ENCODE measurements at regions of chr12 and their contacts with region 1.

Region 1: DNA sequence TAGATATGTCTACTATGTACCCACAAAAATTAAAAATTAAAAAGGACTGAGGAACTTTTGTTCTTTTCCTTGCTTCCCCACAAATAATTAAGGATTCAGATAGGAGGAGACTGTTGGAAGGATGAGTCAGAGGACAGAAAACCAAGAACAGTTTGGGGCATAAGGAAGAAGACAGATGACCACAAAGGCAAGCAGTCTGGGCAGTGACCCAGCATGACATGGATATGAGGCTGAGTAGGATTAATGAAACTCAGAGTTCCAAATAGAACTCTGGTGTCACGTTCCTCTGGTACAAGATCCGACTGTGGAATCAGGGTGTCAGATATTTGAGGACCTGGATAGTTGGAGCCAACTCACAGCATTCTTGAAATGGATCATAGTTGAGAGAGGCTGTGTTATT is 89.3 kb upstream of the SLC38A4 start:
- DNase-seq: peak in 2 of 5 donors; percentile 35 to 50
- ATAC-seq: peak in 3 of 4 donors; percentile 57 to 79 (median 71)
- H3K4me3 ChIP-seq: no peak overlapping the region
- H3K27ac ChIP-seq: no peak overlapping the region
- H3K4me1 ChIP-seq: peaks cover 0 to 4% (median 0%) of the 10 kb centered on the region in 12 donors
- H3K27me3 ChIP-seq: no peaks in the 10 kb centered on the region
- CTCF ChIP-seq: no peak
- POLR2A ChIP-seq: no peak

Region 2: DNA sequence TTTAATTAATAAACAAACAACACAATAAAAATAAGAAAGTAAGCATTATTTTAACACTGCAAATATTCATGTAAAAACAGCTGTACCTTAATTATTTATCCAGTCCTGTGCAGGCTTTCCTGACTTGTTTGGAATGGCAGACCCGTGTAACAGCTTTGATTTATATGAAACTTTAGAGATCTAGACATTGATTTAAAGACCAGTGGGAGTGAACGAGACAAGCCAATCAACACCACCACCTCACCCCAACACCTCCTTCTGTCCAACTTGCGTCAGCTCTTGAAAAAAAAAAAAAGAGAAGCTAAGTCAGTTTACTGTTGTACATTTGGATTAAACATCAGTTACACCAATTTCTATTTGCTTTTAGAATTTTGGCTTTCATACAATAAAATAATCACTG is 111.6 kb before region 1 on chr12:
- intact Hi-C with region 1: no loop called
- DNase-seq: no peak
- ATAC-seq: no peak
- H3K4me3 ChIP-seq: no peak overlapping the region
- H3K27ac ChIP-seq: no peak overlapping the region
- H3K4me1 ChIP-seq: no peaks in the 10 kb centered on the region
- H3K27me3 ChIP-seq: no peaks in the 10 kb centered on the region
- CTCF ChIP-seq: no peak
- POLR2A ChIP-seq: no peak

Region 3: DNA sequence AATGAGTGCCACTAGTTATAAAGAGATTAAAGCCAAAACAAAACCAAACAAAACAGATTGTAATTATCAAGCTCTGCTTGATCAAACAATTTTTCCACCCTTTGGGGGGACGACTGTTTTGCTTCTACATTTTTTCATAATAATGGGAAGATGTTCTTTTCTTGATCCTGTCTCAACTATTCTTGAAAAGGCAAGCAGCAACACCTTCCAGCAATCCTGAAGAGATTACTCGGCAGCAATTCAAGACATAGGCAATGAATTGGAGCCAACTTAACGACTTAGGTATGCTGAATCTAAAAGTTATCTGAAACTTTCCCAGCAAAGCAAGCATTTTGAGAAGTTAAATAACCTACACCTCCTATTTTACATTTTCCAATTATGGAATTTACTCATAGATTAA is 19.4 kb before region 1 on chr12:
- intact Hi-C with region 1: loop called in 2 of 10 experiments (anchors 1 kb)
- DNase-seq: no peak
- ATAC-seq: no peak
- H3K4me3 ChIP-seq: no peak overlapping the region
- H3K27ac ChIP-seq: no peak overlapping the region
- H3K4me1 ChIP-seq: peaks cover 0 to 4% (median 0%) of the 10 kb centered on the region in 12 donors
- H3K27me3 ChIP-seq: no peaks in the 10 kb centered on the region
- CTCF ChIP-seq: no peak
- POLR2A ChIP-seq: no peak

Region 4: GRCh38 chr12:47216150-47216677 is 301.1 kb after region 1 on chr12:
- intact Hi-C with region 1: no loop called
- DNase-seq: peak in 3 of 5 donors; percentile 35 to 52 (median 37)
- ATAC-seq: peak in 3 of 4 donors; percentile 55 to 74 (median 64)
- H3K4me3 ChIP-seq: peak overlapping the region in 5 of 12 donors; percentile 13 to 52 (median 26)
- H3K27ac ChIP-seq: peak overlapping the region in 2 of 12 donors; percentile 67 to 91
- H3K4me1 ChIP-seq: peaks cover 0 to 21% (median 0%) of the 10 kb centered on the region in 12 donors
- H3K27me3 ChIP-seq: no peaks in the 10 kb centered on the region
- CTCF ChIP-seq: no peak
- POLR2A ChIP-seq: no peak